HepG2 (cell line): ENCODE measurements at regions of chr2 and their contacts with region 1.

Region 1: DNA sequence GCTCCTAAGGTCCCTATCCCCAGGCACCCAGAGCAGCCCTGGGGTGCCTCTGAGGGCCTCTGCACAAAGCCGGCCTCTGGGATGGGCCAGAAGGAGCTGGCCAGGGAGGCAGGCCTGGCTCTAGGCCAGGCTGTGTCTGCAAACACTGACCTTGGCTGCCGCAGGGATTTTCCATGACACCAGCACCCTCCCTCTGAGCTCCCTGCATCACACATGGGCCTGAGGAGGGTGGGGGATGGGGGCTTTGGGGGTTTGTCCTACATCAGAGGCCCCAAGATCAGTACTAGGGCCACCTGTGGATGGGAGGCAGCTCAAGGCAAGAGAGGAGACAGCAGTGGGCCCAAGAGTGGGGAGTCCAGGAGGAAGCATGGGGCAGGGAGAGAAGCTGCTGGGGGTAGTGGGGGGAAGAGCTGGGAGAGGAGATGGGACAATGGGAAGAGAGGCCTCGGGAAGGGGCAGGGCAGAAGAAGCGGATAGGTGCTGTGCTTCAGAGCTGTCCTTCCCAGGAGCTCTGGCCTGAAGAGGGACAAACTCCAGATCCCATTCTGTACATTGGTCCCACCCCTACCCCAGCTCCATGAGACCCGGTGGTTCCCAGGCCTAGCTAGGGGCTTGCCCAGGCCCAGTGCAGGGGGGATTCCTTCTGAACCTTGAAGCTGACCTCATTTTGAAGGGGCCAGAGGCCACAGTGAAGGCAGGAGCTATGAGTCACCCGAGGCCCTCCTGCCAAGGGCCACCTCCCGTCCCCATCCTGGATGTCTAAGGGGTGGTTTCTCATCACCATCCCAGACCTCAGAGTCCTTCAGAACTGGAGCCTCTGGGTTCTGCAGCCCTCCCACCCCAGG is 28.0 kb downstream of the KCNK3 start:
- DNase-seq: peak; percentile 58
- ATAC-seq: peak; percentile 58
- H3K4me3 ChIP-seq: no peak overlapping the region; a peak in 1 of 6 replicates
- H3K27ac ChIP-seq: no peak overlapping the region
- H3K4me1 ChIP-seq: peaks cover 48% of the 10 kb centered on the region
- H3K27me3 ChIP-seq: peaks cover 3 to 78% of the 10 kb centered on the region in 2 experiments; a peak in 4 of 5 replicates
- CTCF ChIP-seq: no peak
- EP300 ChIP-seq: peak in 1 of 2 experiments; percentile 60; a peak in 1 of 4 replicates
- POLR2A ChIP-seq: no peak
- RAD21 ChIP-seq: no peak

Region 2: GRCh38 chr2:26630669-26631360 is 89.7 kb before region 1 on chr2:
- CTCF ChIA-PET with region 1: no interaction called
- POLR2A ChIA-PET with region 1: no interaction called
- in situ Hi-C with region 1: no loop called
- intact Hi-C with region 1: loop called (anchors 10 kb)
- DNase-seq: peak; percentile 86
- ATAC-seq: peak; percentile 92
- H3K4me3 ChIP-seq: no peak overlapping the region
- H3K27ac ChIP-seq: no peak overlapping the region
- H3K4me1 ChIP-seq: peaks cover 13% of the 10 kb centered on the region
- H3K27me3 ChIP-seq: peaks cover 5 to 52% of the 10 kb centered on the region in 2 experiments; a peak in 4 of 5 replicates
- CTCF ChIP-seq: no peak
- EP300 ChIP-seq: 0 out of 4 replicates have a peak, but pooled peaks of 1 of the 2 experiments have one; percentile 9
- POLR2A ChIP-seq: no peak
- RAD21 ChIP-seq: no peak

Region 3: GRCh38 chr2:26692279-26692896 is 28.2 kb before region 1 on chr2 and contains the start of gene KCNK3:
- CTCF ChIA-PET with region 1: no interaction called
- POLR2A ChIA-PET with region 1: no interaction called
- in situ Hi-C with region 1: no loop called
- intact Hi-C with region 1: no loop called
- DNase-seq: no peak
- ATAC-seq: peak; percentile 80
- H3K4me3 ChIP-seq: peak within 1 kb of the TSS in 1 of 3 experiments; percentile 20; a peak in 1 of 6 replicates
- H3K27ac ChIP-seq: no peak within 1 kb of the TSS
- H3K4me1 ChIP-seq: peaks cover 12% of the 10 kb centered on the region
- H3K27me3 ChIP-seq: peaks cover 6 to 74% of the 10 kb centered on the region in 2 experiments; a peak in 4 of 5 replicates
- CTCF ChIP-seq: no peak
- EP300 ChIP-seq: no peak
- POLR2A ChIP-seq: no peak
- RAD21 ChIP-seq: no peak
- total RNA-seq, gene KCNK3: not detected in 2 replicates